Activated CD4-positive, alpha-beta memory T cell treated with anti-CD3 and anti-CD28 coated beads for 36 hours (primary cell): ENCODE measurements at regions of chr5 and their contacts with region 1.

Region 1: DNA sequence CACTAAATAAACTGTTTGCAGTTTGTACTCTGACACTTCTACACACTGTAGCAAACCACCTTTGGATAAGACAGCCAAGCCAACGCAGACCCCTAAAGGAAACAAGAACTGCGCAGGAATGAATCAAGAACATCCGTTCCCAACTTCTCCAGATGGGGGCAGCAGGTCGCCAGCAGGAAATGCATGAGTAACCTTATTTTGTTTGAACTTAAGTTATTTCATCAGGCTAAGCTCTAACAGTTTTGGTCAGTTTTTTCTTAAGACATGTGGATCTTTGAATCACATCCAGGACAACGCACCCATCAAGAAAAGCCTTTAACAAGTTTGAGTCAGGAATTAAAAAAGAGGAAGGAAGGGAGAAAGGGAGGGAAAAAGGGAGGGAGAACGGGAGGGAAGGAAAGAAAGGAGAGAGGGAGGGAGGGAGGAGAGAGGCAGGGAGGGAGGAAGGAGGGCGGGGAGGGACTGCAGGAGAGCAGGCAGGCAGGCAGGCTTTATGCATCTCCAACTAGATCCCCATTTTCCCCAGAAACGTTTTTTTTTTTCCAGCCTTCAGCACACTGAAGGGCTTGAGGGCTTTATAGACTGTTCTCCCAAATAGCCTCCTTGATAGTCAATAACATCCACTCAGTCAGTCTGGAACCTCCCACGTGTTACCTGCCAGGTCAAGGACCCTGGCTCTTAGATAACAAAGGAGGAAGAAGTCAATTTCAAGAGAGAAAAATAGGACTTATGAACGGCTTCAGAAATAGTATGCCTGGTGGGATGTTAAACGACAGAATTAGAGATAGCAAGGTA is 22.2 kb downstream of the BHMT start:
- DNase-seq: peak; percentile 81
- H3K4me3 Mint-ChIP-seq: peak overlapping the region; percentile 67
- H3K27ac Mint-ChIP-seq: peak overlapping the region; percentile 74
- H3K4me1 Mint-ChIP-seq: peaks cover 13% of the 10 kb centered on the region
- H3K27me3 Mint-ChIP-seq: peaks cover 3% of the 10 kb centered on the region

Region 2: GRCh38 chr5:78984439-78985115 is 149.3 kb before region 1 on chr5:
- CTCF ChIA-PET with region 1: interaction called, 15 read pairs
- POLR2A ChIA-PET with region 1: no interaction called
- intact Hi-C with region 1: loop called (anchors 2 kb)
- DNase-seq: peak; percentile 86
- H3K4me3 Mint-ChIP-seq: peak overlapping the region; percentile 84
- H3K27ac Mint-ChIP-seq: peak overlapping the region; percentile 87
- H3K4me1 Mint-ChIP-seq: peaks cover 34% of the 10 kb centered on the region
- H3K27me3 Mint-ChIP-seq: no peaks in the 10 kb centered on the region

Region 3: DNA sequence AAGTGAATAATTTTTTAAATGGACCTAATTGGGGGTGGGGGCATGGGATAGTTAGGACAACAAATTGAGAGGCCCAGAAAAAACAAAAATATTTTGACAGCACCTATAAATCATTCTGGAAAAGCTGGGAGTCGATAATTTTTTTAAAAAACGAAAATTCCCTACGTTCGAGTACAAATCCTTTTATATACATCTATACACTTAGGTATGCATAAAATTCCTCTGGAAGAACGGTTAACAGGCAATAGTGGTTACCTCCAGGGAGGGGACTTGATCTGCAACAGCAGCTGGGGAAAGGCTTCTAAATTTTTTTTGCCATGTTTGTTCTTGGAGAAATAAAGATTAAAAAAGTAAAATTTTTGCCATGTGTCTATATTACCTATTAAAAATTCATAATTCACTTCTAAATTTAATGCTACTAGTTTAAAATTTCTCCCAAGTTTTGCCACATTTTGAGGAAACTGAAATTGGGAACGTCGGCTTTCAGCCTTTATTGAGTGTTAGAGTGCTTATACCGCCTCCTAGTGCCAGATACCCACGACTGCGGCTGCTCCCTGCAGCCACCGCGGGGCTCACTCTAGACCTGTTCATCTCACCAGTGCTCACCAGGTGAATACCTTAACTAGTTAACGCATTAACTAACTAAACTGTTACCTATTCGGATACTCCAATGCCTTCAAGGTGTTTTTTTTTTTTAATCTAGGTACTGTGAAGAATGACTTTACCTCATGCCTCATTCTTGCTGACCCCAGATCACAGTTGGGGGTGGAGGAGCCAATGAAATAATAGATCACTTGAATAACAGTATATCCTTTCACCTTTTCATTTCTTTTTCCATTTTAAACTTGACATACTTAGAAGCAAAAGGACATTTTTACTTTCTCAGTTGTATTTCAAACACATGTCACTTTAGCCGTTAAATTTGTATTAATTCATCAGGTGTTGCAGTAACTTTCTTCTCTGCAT is 24.0 kb before region 1 on chr5:
- CTCF ChIA-PET with region 1: interaction called, 28 read pairs
- POLR2A ChIA-PET with region 1: no interaction called
- intact Hi-C with region 1: no loop called
- DNase-seq: peak; percentile 50
- H3K4me3 Mint-ChIP-seq: no peak overlapping the region
- H3K27ac Mint-ChIP-seq: no peak overlapping the region
- H3K4me1 Mint-ChIP-seq: no peaks in the 10 kb centered on the region
- H3K27me3 Mint-ChIP-seq: peaks cover 58% of the 10 kb centered on the region

Region 4: GRCh38 chr5:79157305-79157704 is 23.5 kb after region 1 on chr5:
- CTCF ChIA-PET with region 1: interaction called, 16 read pairs
- POLR2A ChIA-PET with region 1: no interaction called
- intact Hi-C with region 1: no loop called
- DNase-seq: no peak
- H3K4me3 Mint-ChIP-seq: no peak overlapping the region
- H3K27ac Mint-ChIP-seq: no peak overlapping the region
- H3K4me1 Mint-ChIP-seq: no peaks in the 10 kb centered on the region
- H3K27me3 Mint-ChIP-seq: peaks cover 6% of the 10 kb centered on the region

Region 5: DNA sequence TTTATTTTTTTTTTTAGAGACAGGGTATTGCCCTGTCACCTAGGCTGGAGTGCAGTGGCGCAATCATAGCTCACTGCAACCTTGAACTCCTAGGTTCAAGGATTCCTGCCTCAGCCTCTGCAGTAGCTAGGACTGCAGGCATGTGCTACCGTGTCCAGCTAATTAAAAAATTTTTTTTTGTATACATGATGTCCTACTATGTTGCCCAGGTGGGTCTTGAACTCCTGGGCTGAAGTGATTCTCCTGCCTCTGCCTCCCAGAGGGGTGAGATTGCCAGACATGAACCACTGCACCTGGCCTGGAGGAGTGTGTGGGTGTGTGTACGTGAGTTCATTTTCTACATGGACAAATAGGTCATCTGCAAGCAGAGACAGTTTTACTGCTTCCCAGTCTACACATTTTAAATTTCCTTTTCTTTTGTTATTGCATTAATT is 135.9 kb after region 1 on chr5:
- CTCF ChIA-PET with region 1: no interaction called
- POLR2A ChIA-PET with region 1: no interaction called
- intact Hi-C with region 1: no loop called
- DNase-seq: no peak
- H3K4me3 Mint-ChIP-seq: no peak overlapping the region
- H3K27ac Mint-ChIP-seq: no peak overlapping the region
- H3K4me1 Mint-ChIP-seq: peaks cover 31% of the 10 kb centered on the region
- H3K27me3 Mint-ChIP-seq: no peaks in the 10 kb centered on the region

Region 6: GRCh38 chr5:79459626-79460025 is 325.8 kb after region 1 on chr5:
- CTCF ChIA-PET with region 1: interaction called, 120 read pairs
- POLR2A ChIA-PET with region 1: no interaction called
- intact Hi-C with region 1: loop called (anchors 1 kb)
- DNase-seq: no peak
- H3K4me3 Mint-ChIP-seq: no peak overlapping the region
- H3K27ac Mint-ChIP-seq: no peak overlapping the region
- H3K4me1 Mint-ChIP-seq: peaks cover 7% of the 10 kb centered on the region
- H3K27me3 Mint-ChIP-seq: peaks cover 6% of the 10 kb centered on the region

Region 7: DNA sequence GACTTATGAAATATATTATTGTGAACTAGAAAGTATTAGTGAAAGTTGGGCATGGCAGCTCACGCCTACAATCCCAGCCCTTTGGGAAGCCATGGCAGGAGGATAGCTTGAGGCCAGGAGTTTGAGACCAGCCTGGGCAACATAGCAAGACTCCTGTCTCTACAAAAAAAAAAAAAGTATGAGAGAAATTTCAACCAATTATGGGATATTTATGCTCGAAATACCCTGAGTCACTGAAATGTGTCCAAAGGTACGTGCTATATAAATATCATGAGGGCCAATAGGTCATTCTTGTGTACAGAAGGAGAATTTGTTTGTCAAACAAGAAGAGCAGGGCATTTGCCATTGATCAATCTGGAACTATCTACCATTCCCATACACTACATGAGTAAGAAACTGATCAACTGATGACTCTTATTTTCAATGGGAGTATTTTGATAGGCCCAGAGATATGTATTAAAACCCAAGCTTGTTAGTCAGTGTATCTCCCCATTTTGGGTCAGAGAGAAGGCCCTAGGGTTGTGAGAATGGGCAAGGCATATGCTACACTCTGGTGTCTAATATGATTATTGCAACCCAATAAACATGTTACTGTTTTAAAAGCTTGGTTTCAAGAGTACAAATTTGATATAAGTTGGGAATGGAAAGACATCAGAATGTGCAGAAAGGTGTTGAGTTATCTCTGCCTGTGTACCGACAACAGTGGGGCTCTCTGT is 401.8 kb after region 1 on chr5:
- CTCF ChIA-PET with region 1: interaction called, 10 read pairs
- POLR2A ChIA-PET with region 1: no interaction called
- intact Hi-C with region 1: no loop called
- DNase-seq: no peak
- H3K4me3 Mint-ChIP-seq: no peak overlapping the region
- H3K27ac Mint-ChIP-seq: no peak overlapping the region
- H3K4me1 Mint-ChIP-seq: no peaks in the 10 kb centered on the region
- H3K27me3 Mint-ChIP-seq: peaks cover 6% of the 10 kb centered on the region